ENCODE measurements at regions of chr14 and their contacts with region 1.

Region 1: DNA sequence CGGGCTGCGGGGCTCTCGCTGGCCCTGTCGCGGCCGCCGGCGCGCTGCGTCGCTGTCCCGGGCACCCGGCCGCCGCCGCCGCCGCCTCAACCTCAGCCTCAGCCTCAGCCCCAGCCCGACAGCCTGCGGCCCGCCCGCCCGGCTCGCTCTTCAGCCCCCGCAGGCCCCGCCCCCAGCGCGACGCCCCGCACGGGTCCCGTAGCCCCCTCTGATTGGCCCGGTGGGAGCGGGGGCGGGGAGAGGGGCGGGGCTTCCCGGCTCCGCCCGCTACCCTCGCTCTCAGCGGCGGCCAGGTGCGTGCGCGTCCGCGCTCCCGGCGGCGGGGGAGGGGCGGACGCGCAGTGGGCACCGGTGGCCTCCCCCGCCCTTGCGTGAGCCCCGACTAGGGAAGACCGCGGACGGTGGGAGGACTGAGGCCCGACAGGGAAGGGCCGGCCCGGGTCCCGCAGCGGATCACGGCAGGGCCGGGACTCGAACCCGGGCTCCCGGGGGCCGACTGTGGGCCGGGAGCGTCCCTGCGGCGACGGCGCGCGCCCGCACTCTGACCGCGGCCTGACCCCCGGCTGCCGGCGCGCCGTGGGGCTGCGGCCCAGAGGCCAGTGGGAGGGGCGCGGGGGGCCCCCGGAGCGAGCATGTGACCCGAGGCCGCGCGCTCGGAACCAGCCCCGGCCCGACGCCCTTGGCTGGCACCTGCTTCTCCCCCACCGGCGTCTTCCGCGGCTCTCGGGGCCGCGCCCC is at the start of gene PPP1R13B:
- DNase-seq: peak; percentile 95 to 96 (median 95)
- ATAC-seq: peak; percentile 93 to 96 (median 96)
- H3K4me3 ChIP-seq: peak within 1 kb of the TSS; percentile 50 to 98 (median 82)
- H3K27ac ChIP-seq: peak within 1 kb of the TSS; percentile 79 to 96 (median 90)
- H3K4me1 ChIP-seq: peaks cover 0 to 44% (median 25%) of the 10 kb centered on the region in 12 donors
- H3K27me3 ChIP-seq: peaks cover 0 to 9% (median 0%) of the 10 kb centered on the region in 9 donors
- CTCF ChIP-seq: no peak
- POLR2A ChIP-seq: peak in 1 of 2 donors; percentile 67
- total RNA-seq, gene PPP1R13B: 59.0 to 96.2 (median 78.1) TPM

Region 2: DNA sequence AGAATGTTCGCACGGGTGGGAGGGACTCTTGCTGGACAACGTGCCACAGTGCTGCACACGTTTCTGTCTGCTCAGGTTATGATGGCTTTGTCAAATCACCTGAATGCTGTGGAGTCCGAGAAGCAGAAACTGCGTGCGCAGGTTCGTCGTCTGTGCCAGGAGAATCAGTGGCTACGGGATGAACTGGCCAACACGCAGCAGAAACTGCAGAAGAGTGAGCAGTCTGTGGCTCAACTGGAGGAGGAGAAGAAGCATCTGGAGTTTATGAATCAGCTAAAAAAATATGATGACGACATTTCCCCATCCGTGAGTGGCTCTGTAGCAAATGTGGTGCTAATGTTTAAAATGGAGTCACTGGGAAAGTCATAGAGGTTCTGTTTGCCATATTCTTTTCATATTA is 190.1 kb before region 1 on chr14:
- intact Hi-C with region 1: no loop called
- DNase-seq: peak in 2 of 5 donors; percentile 54 to 57
- ATAC-seq: peak in 3 of 4 donors; percentile 69 to 79 (median 73)
- H3K4me3 ChIP-seq: no peak overlapping the region
- H3K27ac ChIP-seq: peak overlapping the region in 3 of 12 donors; percentile 17 to 43 (median 23)
- H3K4me1 ChIP-seq: peaks cover 5 to 52% (median 38%) of the 10 kb centered on the region in 12 donors
- H3K27me3 ChIP-seq: no peaks in the 10 kb centered on the region
- CTCF ChIP-seq: no peak
- POLR2A ChIP-seq: no peak

Region 3: GRCh38 chr14:103880348-103881267 is 33.0 kb after region 1 on chr14:
- intact Hi-C with region 1: loop called in 1 of 10 experiments (anchors 1 kb)
- DNase-seq: peak; percentile 70 to 89 (median 81)
- ATAC-seq: peak; percentile 47 to 60 (median 53)
- H3K4me3 ChIP-seq: peak overlapping the region in 9 of 12 donors; percentile 5 to 40 (median 27)
- H3K27ac ChIP-seq: peak overlapping the region; percentile 63 to 95 (median 84)
- H3K4me1 ChIP-seq: peaks cover 10 to 42% (median 37%) of the 10 kb centered on the region in 12 donors
- H3K27me3 ChIP-seq: peaks cover 0 to 7% (median 0%) of the 10 kb centered on the region in 9 donors
- CTCF ChIP-seq: no peak
- POLR2A ChIP-seq: no peak

Region 4: DNA sequence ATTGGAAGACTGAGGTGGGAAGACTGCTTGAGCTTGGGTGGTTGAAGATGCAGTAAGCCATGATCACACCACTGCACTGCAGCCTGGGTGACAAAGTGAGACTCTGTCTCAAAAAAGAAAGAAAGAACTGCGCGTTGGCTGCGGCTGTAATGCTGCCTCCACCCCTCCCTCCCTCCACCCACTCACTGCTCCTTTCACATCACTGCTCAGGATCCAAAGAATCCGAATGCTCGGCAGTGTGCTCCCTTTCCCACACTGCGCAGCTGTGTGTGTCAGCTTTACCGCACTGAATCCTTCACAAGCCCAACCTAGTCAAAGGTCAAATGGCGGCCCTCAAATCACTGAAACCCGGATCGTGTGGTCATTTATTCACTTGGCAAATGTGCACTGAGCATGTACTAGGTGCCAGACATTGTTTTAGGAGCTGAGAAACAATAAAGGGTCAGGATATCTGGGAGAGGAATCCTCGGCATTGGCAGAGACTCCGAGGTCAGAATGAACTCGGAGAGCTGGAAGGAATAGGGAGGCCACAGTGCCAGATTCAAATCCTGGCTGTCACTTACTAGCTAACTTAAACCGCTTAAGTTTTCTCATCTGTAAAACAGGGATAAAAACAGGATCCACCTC is 69.1 kb after region 1 on chr14:
- intact Hi-C with region 1: loop called in 2 of 10 experiments (anchors 2 to 10 kb)
- DNase-seq: no peak
- ATAC-seq: peak in 1 of 4 donors; percentile 17
- H3K4me3 ChIP-seq: no peak overlapping the region
- H3K27ac ChIP-seq: peak overlapping the region in 2 of 12 donors; percentile 28 to 37
- H3K4me1 ChIP-seq: peaks cover 2 to 47% (median 28%) of the 10 kb centered on the region in 12 donors
- H3K27me3 ChIP-seq: no peaks in the 10 kb centered on the region
- CTCF ChIP-seq: no peak
- POLR2A ChIP-seq: no peak

Measured in heart left ventricle (tissue), 16 donors.